ENCODE measurements at regions of chr11 and their contacts with region 1.

Region 1: GRCh38 chr11:130431337-130432200 is 3.2 kb upstream of the ADAMTS8 start:
- DNase-seq: peak; percentile 89
- H3K4me3 ChIP-seq: no peak overlapping the region
- H3K27ac ChIP-seq: no peak overlapping the region
- H3K4me1 ChIP-seq: peaks cover 14% of the 10 kb centered on the region
- H3K27me3 ChIP-seq: no peaks in the 10 kb centered on the region
- CTCF ChIP-seq: peak; percentile 43 to 77 (median 74)
- POLR2A ChIP-seq: no peak

Region 2: DNA sequence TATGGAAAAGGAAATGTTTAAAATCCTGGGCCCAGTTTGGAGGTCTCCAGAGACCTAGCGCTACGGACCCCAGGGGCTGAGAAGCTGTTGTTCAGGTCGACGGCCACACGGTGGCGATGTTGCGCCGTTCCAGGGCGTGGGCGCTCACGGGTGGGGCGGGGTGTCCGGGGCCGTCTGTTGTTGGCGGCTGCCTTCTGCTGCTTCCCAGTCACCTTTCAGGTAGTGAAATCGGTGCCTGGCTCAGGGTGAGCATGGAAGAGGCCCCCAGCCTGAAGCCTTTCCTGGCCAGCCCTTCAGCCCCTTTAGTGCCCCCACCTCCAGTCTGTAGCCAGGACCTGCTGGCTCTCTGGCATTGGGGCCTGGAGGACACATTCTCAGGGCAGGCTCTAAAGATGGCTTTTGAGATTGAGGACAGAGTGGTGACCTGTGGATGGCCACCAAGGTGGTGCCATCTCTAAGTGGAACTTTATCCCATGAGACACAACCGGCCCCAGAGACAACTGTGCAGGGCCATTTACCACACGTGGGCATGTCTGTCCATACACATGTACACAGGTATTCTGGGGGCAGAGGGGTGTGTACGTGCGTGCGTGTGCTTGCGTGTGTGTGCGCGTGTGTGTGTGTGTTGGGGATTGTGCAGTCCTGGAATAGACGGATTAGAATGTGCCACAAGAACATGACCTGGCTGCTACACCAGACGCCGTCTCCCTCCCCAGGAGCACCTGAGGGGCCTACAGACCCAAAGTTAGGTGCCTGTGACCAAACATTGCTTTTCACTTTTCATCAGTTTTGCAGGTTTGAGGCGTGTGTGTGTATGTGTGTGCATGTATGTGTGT is 218.2 kb before region 1 on chr11:
- intact Hi-C with region 1: loop called (anchors 10 kb)
- DNase-seq: peak; percentile 77
- H3K4me3 ChIP-seq: no peak overlapping the region
- H3K27ac ChIP-seq: no peak overlapping the region
- H3K4me1 ChIP-seq: peaks cover 21% of the 10 kb centered on the region
- H3K27me3 ChIP-seq: no peaks in the 10 kb centered on the region
- CTCF ChIP-seq: peak; percentile 72 to 98 (median 90)
- POLR2A ChIP-seq: no peak

Region 3: DNA sequence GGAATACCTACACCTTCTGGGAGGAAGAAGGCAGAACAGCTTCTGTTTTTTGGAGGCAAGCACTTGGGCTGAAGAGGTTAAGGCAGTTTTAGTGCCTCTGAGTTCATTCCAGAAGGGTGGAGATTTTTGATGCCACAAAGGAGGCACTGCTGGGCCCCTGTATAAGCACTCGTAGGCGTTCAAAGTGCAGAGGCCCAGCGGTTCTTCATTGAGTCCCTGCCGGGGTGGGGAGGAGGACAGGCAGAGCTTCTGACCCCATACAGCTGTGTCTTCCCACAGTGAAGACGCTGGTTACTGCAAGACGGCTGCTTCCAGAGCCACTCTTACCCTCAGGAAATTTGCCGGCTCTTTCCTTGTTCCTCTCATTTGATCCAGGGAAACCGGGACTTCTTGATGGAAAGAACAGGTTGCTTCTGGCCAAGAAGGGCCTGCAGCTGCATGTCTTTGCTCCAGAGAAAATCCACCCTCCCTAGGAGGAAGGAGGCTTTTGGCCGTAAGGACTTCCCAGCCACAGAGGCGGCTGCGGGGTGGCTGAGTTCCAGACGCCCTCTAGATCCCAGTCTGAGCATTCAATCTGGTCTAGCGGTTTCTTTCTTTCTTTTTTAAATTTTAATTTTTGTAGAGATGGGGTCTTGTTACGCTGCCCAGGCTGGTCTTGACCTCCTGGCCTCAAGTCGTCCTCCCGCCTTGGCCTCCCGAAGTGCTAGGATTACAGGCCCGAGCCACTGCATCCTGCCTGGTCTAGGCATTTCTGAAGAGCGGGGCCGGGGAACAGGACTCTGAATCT is 26.2 kb after region 1 on chr11:
- intact Hi-C with region 1: no loop called
- DNase-seq: no peak
- H3K4me3 ChIP-seq: no peak overlapping the region
- H3K27ac ChIP-seq: peak overlapping the region in 1 of 2 donors; percentile 30
- H3K4me1 ChIP-seq: no peaks in the 10 kb centered on the region
- H3K27me3 ChIP-seq: no peaks in the 10 kb centered on the region
- CTCF ChIP-seq: no peak
- POLR2A ChIP-seq: no peak

Region 4: DNA sequence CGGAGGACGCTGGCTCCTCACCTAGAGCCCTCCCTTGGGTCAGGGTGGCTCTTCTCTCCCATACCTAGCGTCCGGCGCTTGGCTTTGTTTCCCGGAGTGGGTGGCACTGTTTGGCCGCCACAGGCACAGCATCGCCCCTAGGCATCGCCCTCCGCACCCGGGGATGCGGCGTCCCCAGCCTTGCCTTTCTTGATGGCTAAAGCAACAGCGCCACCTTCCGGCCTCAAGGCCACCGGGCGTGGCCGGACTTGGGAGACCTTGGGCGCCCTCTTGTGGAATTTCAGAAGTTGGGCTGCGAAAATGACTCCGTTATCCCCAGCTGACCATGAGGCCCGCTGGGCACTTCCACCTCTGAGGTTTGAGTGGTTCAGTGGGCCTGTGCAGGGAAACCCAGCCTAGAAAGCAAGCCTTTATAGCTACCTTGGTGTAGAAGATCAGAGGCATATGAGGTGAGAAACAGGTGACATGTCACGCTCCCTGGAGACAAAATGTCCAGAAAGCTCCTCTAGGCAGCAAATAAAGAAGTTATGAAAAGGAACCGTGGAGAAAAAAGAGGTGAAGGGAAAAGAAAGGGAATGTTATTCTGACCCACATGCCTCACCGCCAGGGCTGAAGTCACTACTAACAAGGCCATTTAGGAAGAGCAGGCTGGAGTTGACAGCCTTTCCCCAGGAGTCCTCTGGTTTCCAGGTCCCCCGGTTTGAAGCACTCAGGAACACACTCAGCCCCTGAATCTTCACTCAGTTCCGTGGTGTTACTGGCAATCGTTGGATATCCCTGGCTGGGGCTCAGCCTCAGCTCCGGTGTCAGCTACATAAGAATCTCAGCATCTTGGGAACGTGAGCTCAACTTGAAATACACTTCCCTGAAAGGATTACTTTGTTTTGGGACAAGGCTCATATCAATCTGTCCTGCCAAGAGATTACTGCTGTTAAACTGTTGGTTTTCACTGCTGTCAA is 430.6 kb after region 1 on chr11:
- intact Hi-C with region 1: loop called (anchors 2 kb)
- DNase-seq: peak; percentile 97
- H3K4me3 ChIP-seq: peak overlapping the region in 1 of 2 donors; percentile 14
- H3K27ac ChIP-seq: no peak overlapping the region
- H3K4me1 ChIP-seq: no peaks in the 10 kb centered on the region
- H3K27me3 ChIP-seq: no peaks in the 10 kb centered on the region
- CTCF ChIP-seq: peak; percentile 100
- POLR2A ChIP-seq: no peak